ENCODE measurements at regions of chr3 and their contacts with region 1.

Region 1: DNA sequence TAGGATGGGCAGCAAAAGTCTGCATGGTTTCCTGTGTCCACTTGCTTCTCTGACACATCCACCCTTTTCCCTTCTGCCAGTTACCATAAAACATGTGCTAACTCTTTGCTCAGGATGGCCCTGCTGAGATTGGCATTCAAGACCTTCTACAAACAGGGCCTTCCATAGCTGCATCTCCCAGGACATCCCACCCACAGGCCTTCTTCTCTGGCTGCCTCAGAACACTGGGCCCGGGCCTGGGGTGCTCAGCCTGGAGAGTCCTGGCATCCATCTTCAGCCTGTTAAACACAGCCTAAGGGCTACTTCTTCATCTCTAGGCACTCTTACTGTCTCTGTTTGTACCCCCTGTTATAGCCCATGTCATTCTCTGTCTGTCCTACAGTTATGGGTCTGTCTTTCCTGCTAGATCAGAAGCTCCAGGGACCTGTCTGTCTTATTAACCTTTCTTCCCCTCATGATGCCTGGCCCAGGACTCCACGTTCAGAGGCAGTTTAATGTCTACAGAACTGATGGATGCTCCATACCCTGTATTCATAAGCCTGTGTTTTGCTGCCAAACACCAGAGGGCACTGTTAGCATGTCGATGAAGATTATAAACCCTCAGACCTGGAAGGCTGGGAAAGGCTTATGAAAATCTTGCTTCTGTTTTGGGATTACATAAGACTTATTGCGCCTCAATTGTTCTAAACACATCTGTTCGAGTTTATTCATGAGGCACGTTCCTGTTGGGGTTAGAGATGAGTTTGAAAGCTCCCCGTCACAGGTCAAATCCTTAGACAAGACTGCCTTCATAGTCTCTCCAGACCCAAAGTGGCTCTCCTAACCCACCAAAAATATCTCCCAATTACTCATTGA is 16.5 kb downstream of the SEMA3G start:
- H3K4me3 ChIP-seq: no peak overlapping the region
- H3K27ac ChIP-seq: no peak overlapping the region
- H3K4me1 ChIP-seq: no peaks in the 10 kb centered on the region
- CTCF ChIP-seq: peak; percentile 27; the same call in 1 of the 2 replicates

Region 2: GRCh38 chr3:52406231-52406661 is 22.1 kb before region 1 on chr3:
- CTCF ChIA-PET with region 1: no interaction called
- POLR2A ChIA-PET with region 1: no interaction called
- H3K4me3 ChIP-seq: no peak overlapping the region
- H3K27ac ChIP-seq: no peak overlapping the region
- H3K4me1 ChIP-seq: no peaks in the 10 kb centered on the region
- CTCF ChIP-seq: no peak

Region 3: DNA sequence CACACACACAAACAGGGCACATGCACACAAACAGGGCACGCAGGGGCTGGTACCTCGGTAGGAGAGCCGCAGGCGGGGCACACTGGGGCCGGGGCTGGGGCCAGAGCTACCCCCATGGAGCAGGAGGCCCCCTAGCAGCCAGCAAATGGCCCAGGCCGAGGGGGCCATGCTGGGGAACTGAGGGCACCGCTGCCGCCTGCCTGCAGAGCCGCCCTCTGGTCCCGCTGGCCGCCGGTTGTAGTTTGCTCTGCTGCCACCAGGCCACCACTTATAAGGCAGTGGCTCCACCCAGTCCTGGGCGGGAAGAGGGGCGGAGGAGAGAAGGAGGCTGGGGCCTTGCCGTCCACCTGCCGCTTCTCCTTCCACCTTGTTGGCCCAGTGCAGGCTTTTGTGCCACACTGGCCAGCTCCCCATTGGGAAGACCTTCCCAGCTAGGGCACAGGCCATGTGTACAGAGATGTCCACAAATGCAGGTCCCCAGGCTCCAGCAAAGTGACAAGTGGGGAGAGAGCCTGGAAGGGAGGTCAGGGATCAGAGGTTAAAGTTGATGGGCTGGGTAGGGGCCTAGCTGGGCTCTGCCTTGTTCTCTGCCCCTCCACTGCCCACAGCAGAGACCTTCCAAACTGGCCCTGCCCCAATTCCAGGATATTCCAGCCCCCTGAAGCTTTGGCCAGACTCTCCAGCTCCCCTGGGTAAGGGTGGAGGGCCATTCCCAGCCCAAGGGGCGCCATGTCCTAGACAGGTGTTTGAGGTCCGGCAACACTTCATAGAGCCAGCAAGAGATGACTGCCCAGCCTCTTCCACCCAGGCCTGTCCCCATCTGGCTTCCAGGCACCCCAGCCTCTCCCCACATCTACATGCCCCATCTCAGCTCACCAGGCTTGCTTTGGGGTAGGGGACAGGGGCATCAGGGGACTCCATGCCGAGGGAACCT is 16.7 kb after region 1 on chr3 and contains the start of gene SEMA3G:
- CTCF ChIA-PET with region 1: interaction called, 97 read pairs
- POLR2A ChIA-PET with region 1: no interaction called
- H3K4me3 ChIP-seq: no peak within 1 kb of the TSS
- H3K27ac ChIP-seq: no peak within 1 kb of the TSS
- H3K4me1 ChIP-seq: no peaks in the 10 kb centered on the region
- CTCF ChIP-seq: peak; percentile 64